Posterior cingulate gyrus (tissue), 11 donors: ENCODE measurements at regions of chr14 and their contacts with region 1.

Region 1: DNA sequence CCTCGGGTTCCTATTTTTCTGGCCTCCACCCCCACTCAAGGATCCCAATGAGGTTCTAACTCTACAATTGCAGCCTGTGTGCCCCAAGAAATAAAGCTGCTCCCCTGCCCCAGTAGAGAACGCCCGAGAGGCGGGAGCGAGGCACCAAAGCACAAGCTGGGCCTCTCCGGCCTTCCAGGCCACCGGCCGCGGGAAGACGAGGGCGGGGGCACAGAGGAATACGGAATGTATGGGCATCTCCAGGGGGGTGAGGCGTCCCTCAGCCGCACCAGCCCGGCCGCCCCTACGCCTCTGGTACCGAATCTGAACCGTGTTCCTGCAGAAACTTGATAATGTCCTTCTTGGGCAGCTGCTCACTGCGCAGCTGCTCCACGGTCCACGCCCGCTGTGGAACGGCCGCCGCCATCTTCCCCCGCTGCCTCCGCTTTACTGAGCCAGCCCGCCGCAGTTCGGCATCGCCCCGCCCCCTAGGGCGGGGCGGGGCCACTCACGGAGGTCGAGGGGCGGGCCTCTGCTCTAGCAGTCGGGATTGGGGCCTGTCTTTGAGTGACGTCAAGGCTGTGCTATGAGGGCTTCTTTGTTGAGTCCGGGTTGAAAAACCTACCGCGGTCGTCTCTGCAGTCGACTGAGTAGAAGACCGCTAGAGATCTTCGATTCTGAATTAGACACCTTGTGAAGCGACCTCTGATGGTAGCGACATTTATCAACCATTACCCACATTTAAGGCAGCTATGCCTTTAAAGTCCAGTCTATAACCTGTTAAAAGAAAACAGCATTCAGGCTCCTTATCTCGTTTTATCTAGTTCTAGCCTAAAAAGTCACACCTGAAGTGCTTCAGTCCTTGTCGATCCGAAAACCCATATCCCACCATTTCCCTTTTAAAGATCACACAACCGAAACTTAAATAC is at the start of gene FKBP3:
- DNase-seq: peak; percentile 94 to 99 (median 96)

Region 2: DNA sequence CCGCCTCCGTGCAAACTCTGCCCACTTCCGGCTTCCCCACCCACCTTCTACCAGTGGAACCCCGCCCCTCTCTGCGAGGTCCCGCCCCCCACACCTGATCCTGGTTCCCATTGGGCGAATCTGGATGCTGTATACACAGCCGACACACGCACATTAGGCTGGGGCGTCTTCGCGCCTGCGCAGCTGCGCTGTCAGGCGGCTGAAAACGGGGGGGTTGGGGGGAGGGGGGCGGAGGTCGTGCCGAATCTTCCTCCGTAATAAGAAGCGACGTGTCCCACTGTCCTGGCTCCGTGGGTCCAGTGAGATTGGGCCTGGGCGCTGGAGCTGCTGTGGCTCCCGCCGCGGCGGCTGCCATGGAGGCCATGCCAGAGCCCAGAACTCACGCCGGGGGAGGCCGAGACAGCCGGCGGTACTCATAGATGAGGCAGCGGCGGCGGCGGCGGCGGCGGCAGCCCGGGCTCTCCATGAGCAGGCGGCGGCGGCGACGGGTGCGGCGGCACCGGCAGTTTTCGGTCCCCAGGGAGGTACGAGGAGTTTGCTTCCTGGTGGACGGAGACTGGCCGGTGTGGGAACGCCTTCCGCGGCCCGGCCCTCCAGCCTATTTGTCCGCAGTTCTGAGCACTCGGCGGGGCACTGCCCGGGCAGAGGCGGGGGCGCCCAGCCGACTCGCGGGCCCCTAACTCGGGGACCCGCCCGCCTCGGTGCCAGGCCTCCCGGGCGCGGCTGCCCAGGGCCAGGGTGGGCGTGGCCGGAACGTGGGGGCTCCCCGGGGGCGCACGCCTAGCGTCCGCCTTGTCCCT is 237.1 kb before region 1 on chr14:
- intact Hi-C with region 1: loop called (anchors 1 kb)
- DNase-seq: peak; percentile 96 to 99 (median 98)

Region 3: GRCh38 chr14:44912041-44912869 is 222.1 kb before region 1 on chr14:
- intact Hi-C with region 1: loop called (anchors 1 kb)
- DNase-seq: peak in 2 of 10 donors; percentile 74 to 80

Region 4: GRCh38 chr14:45083971-45084722 is 50.2 kb before region 1 on chr14 and contains the start of gene PRPF39:
- intact Hi-C with region 1: loop called (anchors 2 kb)
- DNase-seq: peak; percentile 87 to 99 (median 94)

Region 5: GRCh38 chr14:45253068-45253753 is 118.9 kb after region 1 on chr14 and contains the start of gene MIS18BP1:
- intact Hi-C with region 1: loop called (anchors 10 kb)
- DNase-seq: peak; percentile 69 to 98 (median 88)

Region 6: GRCh38 chr14:45757655-45758054 is 623.4 kb after region 1 on chr14:
- intact Hi-C with region 1: no loop called
- DNase-seq: no peak